HCT116 (cell line): ENCODE measurements at regions of chr12 and their contacts with region 1.

Region 1: GRCh38 chr12:47767216-47767724 is 5.8 kb upstream of the SLC48A1 start:
- DNase-seq: peak; percentile 52
- ATAC-seq: peak; percentile 83
- H3K4me3 ChIP-seq: no peak overlapping the region
- H3K27ac ChIP-seq: no peak overlapping the region
- H3K4me1 ChIP-seq: peaks cover 12 to 24% of the 10 kb centered on the region in 2 experiments
- H3K27me3 ChIP-seq: no peaks in the 10 kb centered on the region
- CTCF ChIP-seq: peak; percentile 71 to 90 (median 71)
- POLR2A ChIP-seq: no peak
- RAD21 ChIP-seq: peak; percentile 90

Region 2: GRCh38 chr12:47779301-47779942 is 12.2 kb after region 1 on chr12:
- CTCF ChIA-PET with region 1: interaction called, 30 read pairs
- POLR2A ChIA-PET with region 1: no interaction called
- RAD21 ChIA-PET with region 1: no interaction called
- intact Hi-C with region 1: no loop called
- DNase-seq: peak; percentile 61
- ATAC-seq: peak; percentile 89
- H3K4me3 ChIP-seq: no peak overlapping the region
- H3K27ac ChIP-seq: no peak overlapping the region
- H3K4me1 ChIP-seq: peaks cover 17 to 39% of the 10 kb centered on the region in 2 experiments
- H3K27me3 ChIP-seq: no peaks in the 10 kb centered on the region
- CTCF ChIP-seq: peak; percentile 91 to 97 (median 94)
- POLR2A ChIP-seq: no peak
- RAD21 ChIP-seq: peak; percentile 94

Region 3: DNA sequence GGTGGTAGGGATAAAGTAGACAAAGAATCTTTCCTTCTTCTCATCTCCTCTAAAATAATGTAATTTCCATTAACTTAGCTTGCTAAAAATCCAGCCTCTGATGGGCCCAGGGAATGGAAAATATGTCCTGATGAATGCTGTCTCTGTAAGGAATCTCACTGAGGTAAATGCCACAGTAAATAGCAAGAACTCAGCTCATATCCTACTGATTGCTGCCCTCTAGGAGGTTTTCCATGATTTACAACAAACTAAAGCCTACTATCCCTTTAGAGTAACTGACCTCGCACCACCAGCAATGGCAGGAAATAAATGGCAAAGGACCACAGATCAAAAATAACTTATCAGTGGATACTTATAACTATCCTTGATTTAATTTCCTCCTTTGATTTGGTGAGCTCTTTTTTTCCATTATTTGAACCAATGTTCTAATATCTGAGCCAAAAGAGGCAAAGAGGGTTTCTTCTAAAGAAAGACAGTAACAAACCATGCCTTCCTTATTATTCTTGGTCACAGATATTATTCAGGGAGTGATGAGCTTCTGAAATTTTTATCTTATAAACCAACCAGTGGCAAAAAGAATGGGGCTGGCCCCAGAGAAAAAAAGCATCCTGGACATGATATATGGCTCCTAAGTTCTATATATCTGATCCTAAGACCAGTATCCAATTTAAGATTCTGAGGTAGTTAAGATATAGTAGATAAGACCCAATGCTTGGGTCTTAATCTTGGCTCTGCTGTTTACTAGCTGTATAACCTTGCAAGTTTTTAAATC is 294.9 kb after region 1 on chr12:
- CTCF ChIA-PET with region 1: no interaction called
- POLR2A ChIA-PET with region 1: no interaction called
- RAD21 ChIA-PET with region 1: no interaction called
- intact Hi-C with region 1: no loop called
- DNase-seq: no peak
- ATAC-seq: no peak
- H3K4me3 ChIP-seq: no peak overlapping the region
- H3K27ac ChIP-seq: no peak overlapping the region
- H3K4me1 ChIP-seq: no peaks in the 10 kb centered on the region
- H3K27me3 ChIP-seq: no peaks in the 10 kb centered on the region
- CTCF ChIP-seq: 0 out of 6 replicates have a peak, but pooled peaks of 1 of the 3 experiments have one; percentile 3
- POLR2A ChIP-seq: no peak
- RAD21 ChIP-seq: no peak